ENCODE measurements at regions of chr17 and their contacts with region 1.

Region 1: DNA sequence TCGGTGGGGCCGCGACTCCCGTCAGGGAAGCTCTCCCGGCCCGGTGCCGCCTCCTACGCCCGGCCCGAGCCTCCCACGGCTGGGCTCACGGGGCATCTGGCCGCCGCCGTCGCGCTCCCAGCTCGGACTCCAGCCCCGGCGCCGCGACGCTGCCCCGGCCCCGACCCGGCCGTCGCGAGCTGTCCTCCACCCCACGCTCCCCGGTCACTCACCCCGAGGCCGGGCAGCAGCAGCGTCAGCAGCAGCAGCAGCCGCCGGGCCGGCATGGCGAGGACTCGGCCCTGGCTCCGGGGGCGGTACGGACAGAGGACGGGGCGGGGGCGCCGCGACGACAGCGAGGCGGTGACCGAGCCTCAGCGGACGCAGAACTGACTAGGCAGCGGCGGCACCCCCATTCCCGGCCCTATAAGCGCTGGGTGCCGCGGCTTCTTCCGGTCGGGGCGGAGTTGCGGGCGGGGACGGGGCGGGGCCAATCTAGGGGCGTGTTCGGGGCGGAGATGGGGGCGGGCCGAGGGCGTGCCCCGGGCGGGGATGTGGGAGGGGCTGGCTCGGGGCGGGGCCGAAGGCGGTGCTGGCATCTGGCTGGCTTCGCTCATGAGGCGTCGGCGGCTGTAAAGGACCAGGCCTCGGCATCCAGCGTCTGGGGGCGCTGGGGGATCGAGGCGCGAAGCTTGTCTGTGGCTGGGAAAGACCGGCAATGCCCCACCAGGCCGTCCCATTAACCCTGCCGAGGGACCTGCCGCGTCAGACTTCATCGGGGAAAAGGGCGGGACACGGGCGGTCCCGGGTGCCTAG is at the start of gene ERN1:
- DNase-seq: peak; percentile 91
- ATAC-seq: peak; percentile 93
- H3K4me3 ChIP-seq: peak within 1 kb of the TSS; percentile 88
- H3K27ac ChIP-seq: peak within 1 kb of the TSS; percentile 70
- H3K4me1 ChIP-seq: peaks cover 6% of the 10 kb centered on the region
- H3K27me3 ChIP-seq: no peaks in the 10 kb centered on the region
- CTCF ChIP-seq: no peak
- POLR2A ChIP-seq: peak; percentile 94
- RAD21 ChIP-seq: no peak; the same call in none of the 2 replicates
- total RNA-seq, gene ERN1: 2.2 and 2.7 TPM in 2 replicates

Region 2: GRCh38 chr17:64025732-64026294 is 104.1 kb before region 1 on chr17:
- CTCF ChIA-PET with region 1: interaction called, 74 read pairs
- POLR2A ChIA-PET with region 1: interaction called, 3 read pairs
- dilution Hi-C with region 1: no loop called
- in situ Hi-C with region 1: loop called (anchors 5 kb)
- intact Hi-C with region 1: loop called (anchors 1 kb)
- DNase-seq: peak; percentile 70
- ATAC-seq: peak; percentile 88
- H3K4me3 ChIP-seq: no peak overlapping the region
- H3K27ac ChIP-seq: no peak overlapping the region
- H3K4me1 ChIP-seq: 0 out of 2 replicates have a peak, but pooled peaks cover 2% of the 10 kb centered on the region
- H3K27me3 ChIP-seq: peaks cover 4% of the 10 kb centered on the region; the same call in 1 of the 2 replicates
- CTCF ChIP-seq: peak; percentile 86
- POLR2A ChIP-seq: no peak
- RAD21 ChIP-seq: peak; percentile 65

Region 3: DNA sequence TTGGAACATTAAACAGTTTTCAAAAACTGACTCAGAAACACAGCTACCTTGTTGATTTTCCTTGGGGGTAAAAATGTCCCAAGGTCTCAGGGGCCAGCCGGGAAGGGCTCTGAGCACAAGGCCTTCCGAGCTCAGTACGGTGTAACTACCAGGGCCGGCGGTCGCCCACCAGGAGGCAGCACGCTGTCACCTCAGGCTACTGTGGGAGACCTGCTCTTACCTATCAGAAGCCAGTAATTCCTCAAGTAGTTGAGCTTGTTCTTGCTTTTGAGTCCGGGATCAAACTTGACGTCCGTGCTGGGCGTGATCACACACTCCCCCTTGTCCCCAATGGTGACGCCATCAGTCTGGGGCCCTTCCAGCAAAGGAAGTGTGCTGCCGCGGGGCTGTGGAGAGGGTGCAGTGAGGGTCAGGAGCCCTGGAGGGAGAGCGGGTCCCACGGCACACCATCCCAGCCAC is 66.2 kb before region 1 on chr17:
- CTCF ChIA-PET with region 1: interaction called, 4 read pairs
- POLR2A ChIA-PET with region 1: no interaction called
- dilution Hi-C with region 1: no loop called
- in situ Hi-C with region 1: loop called (anchors 5 kb)
- intact Hi-C with region 1: loop called (anchors 1 kb)
- DNase-seq: peak; percentile 27
- ATAC-seq: peak; percentile 49
- H3K4me3 ChIP-seq: no peak overlapping the region
- H3K27ac ChIP-seq: no peak overlapping the region
- H3K4me1 ChIP-seq: peaks cover 2% of the 10 kb centered on the region; the same call in 1 of the 2 replicates
- H3K27me3 ChIP-seq: no peaks in the 10 kb centered on the region
- CTCF ChIP-seq: peak; percentile 43
- POLR2A ChIP-seq: no peak
- RAD21 ChIP-seq: peak; percentile 57

Region 4: DNA sequence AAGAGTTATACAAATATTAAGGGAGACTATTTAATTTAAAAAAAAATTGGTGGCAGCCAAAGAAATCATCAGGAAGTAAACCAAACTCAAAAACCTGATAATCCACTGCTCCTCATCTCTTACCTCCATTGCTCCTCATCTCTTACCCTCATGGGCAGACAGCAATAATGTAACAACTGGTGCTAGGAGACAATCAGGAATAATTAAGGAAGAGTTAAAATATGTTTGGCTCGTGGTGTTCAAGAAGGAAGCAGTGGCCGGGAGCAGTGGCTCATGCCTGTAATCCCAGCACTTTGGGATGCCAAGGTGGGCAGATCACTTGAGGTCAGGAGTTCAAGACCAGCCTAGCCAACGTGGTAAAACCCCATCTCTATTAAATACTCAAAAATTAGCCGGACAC is 18.1 kb before region 1 on chr17:
- CTCF ChIA-PET with region 1: no interaction called
- POLR2A ChIA-PET with region 1: no interaction called
- dilution Hi-C with region 1: no loop called
- in situ Hi-C with region 1: no loop called
- intact Hi-C with region 1: no loop called
- DNase-seq: no peak
- ATAC-seq: no peak
- H3K4me3 ChIP-seq: no peak overlapping the region
- H3K27ac ChIP-seq: no peak overlapping the region
- H3K4me1 ChIP-seq: peaks cover 14% of the 10 kb centered on the region
- H3K27me3 ChIP-seq: no peaks in the 10 kb centered on the region
- CTCF ChIP-seq: no peak
- POLR2A ChIP-seq: no peak
- RAD21 ChIP-seq: no peak

Region 5: DNA sequence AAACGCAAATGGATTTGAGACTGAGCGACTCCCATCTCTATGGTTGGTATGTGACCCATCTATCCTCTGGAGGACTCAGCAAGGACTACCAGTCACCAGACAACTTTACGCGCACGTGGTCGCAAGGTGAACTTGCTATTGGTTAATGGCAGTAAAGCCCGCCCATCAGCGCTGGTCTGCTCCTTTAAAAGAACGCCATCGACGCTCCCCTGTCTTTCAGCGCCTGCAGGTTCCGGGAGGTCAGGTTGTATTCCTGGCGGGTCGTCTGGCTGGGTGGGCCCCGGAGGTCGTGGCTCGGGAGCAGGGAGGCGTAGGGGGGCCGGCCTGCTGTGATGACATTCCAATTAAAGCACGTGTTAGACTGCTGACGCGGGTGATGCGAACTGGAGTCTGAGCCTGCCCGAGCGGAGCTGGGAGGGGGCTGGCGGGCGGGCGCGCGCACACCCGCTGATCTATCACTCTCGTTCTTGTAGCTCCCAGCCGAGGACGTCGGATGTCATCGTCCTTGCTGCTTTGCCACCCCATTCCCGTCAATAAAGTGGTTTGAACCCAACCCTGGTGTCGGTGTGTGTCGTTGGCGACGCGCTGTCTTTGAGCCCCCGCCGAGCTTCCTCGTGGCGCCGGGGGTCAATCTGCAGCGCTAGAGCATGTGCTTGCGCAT is 15.9 kb after region 1 on chr17:
- CTCF ChIA-PET with region 1: interaction called, 5 read pairs
- POLR2A ChIA-PET with region 1: interaction called, 14 read pairs
- dilution Hi-C with region 1: no loop called
- in situ Hi-C with region 1: no loop called
- intact Hi-C with region 1: no loop called
- DNase-seq: peak; percentile 100
- ATAC-seq: peak; percentile 94
- H3K4me3 ChIP-seq: peak overlapping the region; percentile 56
- H3K27ac ChIP-seq: peak overlapping the region; percentile 75
- H3K4me1 ChIP-seq: peaks cover 5% of the 10 kb centered on the region
- H3K27me3 ChIP-seq: no peaks in the 10 kb centered on the region
- CTCF ChIP-seq: no peak
- POLR2A ChIP-seq: peak; percentile 99
- RAD21 ChIP-seq: no peak

Region 6: DNA sequence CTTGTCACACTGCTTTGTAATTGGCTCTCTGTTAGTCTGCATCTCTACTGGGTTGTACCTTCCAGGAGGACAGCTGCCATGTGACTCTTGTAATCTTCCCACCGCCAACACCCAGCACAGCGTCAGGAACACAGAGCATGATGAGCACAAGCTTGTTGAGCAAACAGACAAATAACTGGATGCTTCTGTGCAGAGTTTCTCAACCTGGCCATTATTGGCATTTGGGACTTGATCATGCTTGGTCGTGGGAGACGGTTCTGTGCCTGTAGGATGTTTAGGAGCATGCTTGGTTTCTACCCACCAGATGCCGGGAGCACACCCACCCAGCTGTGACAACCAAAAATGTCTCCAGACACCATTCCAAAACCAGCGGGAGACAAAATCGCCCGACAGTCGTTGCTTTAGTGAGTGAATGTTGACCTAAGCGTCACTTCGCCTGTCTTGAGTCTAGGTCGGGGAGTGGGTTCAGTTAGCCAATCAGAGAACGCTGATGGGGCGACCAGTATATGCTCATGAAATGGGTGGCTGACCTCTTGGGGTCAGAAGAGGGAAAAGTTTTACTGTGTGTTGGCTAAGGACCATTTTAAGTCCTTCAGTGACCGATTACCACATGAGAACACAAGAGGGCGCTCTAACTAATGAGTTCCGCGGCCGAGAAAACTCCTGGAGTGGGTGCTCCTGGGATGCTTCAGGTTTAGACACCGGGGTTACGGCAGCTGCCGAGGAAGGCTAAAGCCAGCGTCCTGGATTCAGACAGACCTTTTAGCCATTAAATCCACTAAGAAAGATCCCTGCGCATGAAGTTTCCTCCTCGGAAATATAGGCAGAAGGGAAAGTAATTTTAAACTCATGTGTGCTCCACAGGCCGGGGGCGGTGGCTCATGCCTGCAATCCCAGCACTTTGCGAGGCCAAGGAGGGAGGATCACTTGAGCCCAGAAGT is 190.9 kb after region 1 on chr17:
- CTCF ChIA-PET with region 1: no interaction called
- POLR2A ChIA-PET with region 1: no interaction called
- dilution Hi-C with region 1: no loop called
- in situ Hi-C with region 1: no loop called
- intact Hi-C with region 1: no loop called
- DNase-seq: peak; percentile 65
- ATAC-seq: peak; percentile 83; the same call in 1 of the 2 replicates
- H3K4me3 ChIP-seq: no peak overlapping the region
- H3K27ac ChIP-seq: no peak overlapping the region
- H3K4me1 ChIP-seq: no peaks in the 10 kb centered on the region
- H3K27me3 ChIP-seq: peaks cover 44% of the 10 kb centered on the region
- CTCF ChIP-seq: peak; percentile 73
- POLR2A ChIP-seq: no peak
- RAD21 ChIP-seq: peak; percentile 78

Region 7: DNA sequence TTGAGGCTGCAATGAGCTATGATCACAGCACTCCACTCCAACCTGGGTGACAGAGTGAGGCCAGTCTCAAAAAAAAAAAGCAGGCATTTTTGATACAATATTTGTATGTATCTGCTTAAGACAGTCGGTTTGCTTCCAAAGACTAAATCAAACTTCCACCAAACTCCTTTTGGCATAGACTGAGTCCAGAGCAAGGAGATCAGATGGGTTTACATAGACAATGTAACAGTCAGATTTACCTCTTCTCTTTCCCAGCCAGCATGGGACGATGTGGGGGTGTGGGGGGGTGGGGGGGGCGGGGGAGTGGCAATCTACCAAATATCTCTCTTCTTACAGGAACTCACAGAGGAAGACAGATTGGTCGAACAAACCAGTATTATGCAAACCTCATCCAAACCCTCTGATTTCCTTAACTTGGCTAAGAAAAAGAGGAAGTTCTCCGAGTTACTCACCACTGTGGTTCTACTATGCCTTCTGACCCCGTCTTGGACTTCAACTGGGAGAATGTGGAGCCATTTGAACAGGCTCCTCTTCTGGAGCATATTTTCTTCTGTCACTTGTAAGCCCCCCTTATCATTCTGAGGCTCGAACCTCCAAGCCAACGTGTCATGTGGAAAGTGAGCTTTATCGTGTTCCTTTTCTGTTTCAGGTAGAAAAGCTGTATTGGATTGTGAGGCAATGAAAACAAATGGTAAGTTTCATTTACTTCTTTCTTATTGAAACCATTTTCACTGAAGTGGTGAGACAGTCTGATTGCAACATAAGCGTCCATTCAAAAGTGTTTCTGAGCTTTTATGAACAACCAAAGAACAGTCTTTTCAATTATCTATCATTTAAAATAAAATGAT is 318.9 kb after region 1 on chr17 and contains the start of gene MILR1:
- CTCF ChIA-PET with region 1: no interaction called
- POLR2A ChIA-PET with region 1: no interaction called
- dilution Hi-C with region 1: no loop called
- in situ Hi-C with region 1: no loop called
- intact Hi-C with region 1: no loop called
- DNase-seq: peak; percentile 65
- ATAC-seq: peak; percentile 71
- H3K4me3 ChIP-seq: no peak within 1 kb of the TSS
- H3K27ac ChIP-seq: no peak within 1 kb of the TSS
- H3K4me1 ChIP-seq: peaks cover 2% of the 10 kb centered on the region; the same call in 1 of the 2 replicates
- H3K27me3 ChIP-seq: peaks cover 7% of the 10 kb centered on the region
- CTCF ChIP-seq: no peak
- POLR2A ChIP-seq: no peak
- RAD21 ChIP-seq: no peak
- total RNA-seq, gene MILR1: 0.36 and 0.56 TPM in 2 replicates

Measured in IMR-90 (cell line).